Activated CD4-positive, alpha-beta T cell treated with anti-CD3 and anti-CD28 coated beads for 36 hours (primary cell): ENCODE measurements at regions of chr11 and their contacts with region 1.

Region 1: GRCh38 chr11:77318600-77318999 is 17.1 kb upstream of the GDPD4 start:
- DNase-seq: no peak
- ATAC-seq: no peak
- H3K4me3 Mint-ChIP-seq: no peak overlapping the region
- H3K27ac Mint-ChIP-seq: no peak overlapping the region
- H3K4me1 Mint-ChIP-seq: no peaks in the 10 kb centered on the region
- H3K27me3 Mint-ChIP-seq: peaks cover 4% of the 10 kb centered on the region

Region 2: DNA sequence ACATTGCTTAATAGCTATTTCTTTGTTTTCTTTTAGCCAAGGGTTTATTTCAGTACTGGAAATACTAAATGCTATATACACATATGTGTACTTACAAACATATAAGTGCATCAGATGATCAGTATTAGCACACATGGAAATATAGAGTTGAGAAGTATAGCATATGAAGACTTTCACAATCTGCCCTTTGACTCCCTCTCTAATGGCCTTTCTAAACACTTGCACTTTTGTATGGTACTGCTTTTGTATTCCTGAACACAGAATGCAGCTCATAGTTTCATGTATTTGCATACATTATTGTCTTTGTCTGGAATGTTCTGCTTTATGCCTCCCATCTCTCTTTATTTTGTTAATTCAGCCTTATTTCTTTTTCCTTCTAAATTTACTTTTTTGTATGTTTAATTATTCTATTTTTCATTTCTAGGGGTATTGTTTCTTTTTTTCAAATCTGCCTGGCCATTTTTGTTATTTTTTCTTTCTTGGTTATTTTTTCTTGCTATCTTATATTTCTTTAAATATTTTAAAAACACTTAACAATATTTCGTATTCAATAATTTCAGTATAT is 429.1 kb before region 1 on chr11:
- CTCF ChIA-PET with region 1: no interaction called
- POLR2A ChIA-PET with region 1: interaction called, 10 read pairs
- intact Hi-C with region 1: no loop called
- DNase-seq: no peak
- ATAC-seq: no peak
- H3K4me3 Mint-ChIP-seq: no peak overlapping the region
- H3K27ac Mint-ChIP-seq: no peak overlapping the region
- H3K4me1 Mint-ChIP-seq: peaks cover 10% of the 10 kb centered on the region
- H3K27me3 Mint-ChIP-seq: no peaks in the 10 kb centered on the region

Region 3: GRCh38 chr11:77418155-77418970 is 99.8 kb after region 1 on chr11:
- CTCF ChIA-PET with region 1: no interaction called
- POLR2A ChIA-PET with region 1: no interaction called
- intact Hi-C with region 1: no loop called
- DNase-seq: no peak
- ATAC-seq: no peak
- H3K4me3 Mint-ChIP-seq: no peak overlapping the region
- H3K27ac Mint-ChIP-seq: no peak overlapping the region
- H3K4me1 Mint-ChIP-seq: peaks cover 5% of the 10 kb centered on the region
- H3K27me3 Mint-ChIP-seq: no peaks in the 10 kb centered on the region

Region 4: GRCh38 chr11:77497368-77497767 is 178.8 kb after region 1 on chr11:
- CTCF ChIA-PET with region 1: no interaction called
- POLR2A ChIA-PET with region 1: no interaction called
- intact Hi-C with region 1: no loop called
- DNase-seq: no peak
- ATAC-seq: peak; percentile 66
- H3K4me3 Mint-ChIP-seq: no peak overlapping the region
- H3K27ac Mint-ChIP-seq: no peak overlapping the region
- H3K4me1 Mint-ChIP-seq: peaks cover 9% of the 10 kb centered on the region
- H3K27me3 Mint-ChIP-seq: peaks cover 4% of the 10 kb centered on the region

Region 5: DNA sequence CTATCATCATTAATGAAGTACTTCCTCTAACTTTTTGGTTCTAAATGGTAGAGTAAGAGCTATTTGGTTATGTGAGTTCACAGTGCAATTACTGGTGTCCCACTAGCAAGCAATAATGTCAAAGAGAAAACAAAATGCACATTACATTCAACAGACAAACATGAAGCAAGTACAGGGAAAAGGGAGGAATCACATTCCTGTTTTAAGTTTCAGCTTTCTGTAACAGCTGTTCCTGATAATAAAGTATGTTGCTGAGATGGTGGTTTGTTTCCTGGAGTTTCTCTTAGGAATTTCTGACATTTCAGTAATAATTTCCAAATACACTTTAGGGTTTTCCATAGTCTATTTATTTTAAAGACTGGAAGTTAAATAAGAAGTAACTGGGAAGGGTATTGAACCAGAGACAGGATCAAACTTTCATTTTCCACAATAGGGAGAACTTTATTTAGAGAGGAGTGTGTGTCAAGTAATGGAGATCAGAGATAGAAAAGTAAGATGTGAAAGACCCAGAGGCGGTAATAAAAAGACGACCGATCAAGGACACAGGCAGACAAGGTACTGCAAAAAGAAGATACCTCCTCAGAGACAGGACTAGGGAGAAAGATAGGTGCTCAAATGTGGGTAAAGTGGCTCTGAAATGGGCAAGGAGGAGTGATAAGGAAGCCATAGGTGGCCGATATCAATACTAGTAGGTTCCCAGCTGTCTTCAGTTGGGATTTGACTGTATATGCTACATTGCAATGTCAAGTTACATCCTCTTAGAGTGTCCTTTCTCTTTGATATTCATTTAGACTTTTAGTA is 339.8 kb after region 1 on chr11:
- CTCF ChIA-PET with region 1: no interaction called
- POLR2A ChIA-PET with region 1: no interaction called
- intact Hi-C with region 1: no loop called
- DNase-seq: no peak
- ATAC-seq: no peak
- H3K4me3 Mint-ChIP-seq: no peak overlapping the region
- H3K27ac Mint-ChIP-seq: no peak overlapping the region
- H3K4me1 Mint-ChIP-seq: no peaks in the 10 kb centered on the region
- H3K27me3 Mint-ChIP-seq: no peaks in the 10 kb centered on the region